H1 (cell line): ENCODE measurements at regions of chr21 and their contacts with region 1.

Region 1: DNA sequence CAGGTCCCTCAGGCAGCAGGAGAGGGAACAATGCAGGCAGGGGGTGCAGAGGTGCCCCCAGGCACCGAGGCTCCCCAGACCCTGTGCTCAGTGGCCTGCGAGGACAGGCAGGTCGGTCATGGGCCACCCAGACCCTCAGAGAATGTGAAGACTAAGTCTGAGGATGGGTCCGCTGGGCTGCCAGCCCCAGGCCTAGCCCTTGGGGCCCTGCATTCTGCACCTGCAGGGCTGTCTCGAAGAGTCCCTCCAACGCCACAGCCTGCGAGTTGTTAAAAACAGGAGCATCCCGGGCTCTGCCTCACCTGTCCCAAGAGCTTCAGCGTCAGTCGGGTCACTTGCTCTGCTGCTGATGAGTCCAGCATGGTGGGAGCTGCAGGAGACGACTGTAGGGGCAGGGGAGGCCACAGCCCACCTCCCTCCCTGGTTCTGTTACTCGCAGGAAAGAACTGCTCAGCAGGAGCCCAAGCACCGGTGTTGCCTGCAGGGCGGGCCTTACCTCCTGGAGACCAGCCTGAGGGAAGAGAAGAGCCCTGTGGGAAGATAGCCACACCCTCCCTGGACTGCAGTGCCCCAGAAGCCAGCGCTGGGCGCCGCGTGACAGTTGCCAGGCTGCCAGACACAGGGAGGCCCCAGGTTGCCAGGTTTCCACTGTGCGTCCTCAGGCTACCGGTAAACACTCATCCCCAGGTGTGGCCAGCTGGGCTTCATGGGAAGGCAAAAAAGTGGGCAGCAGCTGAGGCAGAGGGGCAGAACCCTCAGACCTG is 5.8 kb downstream of the C21orf58 start:
- DNase-seq: peak in 1 of 2 experiments; percentile 54
- H3K4me3 ChIP-seq: no peak overlapping the region
- H3K27ac ChIP-seq: no peak overlapping the region
- H3K4me1 ChIP-seq: peaks cover 0 to 20% (median 14%) of the 10 kb centered on the region in 4 experiments; a peak in 6 of 7 replicates
- H3K27me3 ChIP-seq: no peaks in the 10 kb centered on the region
- CTCF ChIP-seq: no peak
- EP300 ChIP-seq: no peak
- POLR2A ChIP-seq: no peak; a peak in 1 of 3 replicates
- RAD21 ChIP-seq: no peak

Region 2: GRCh38 chr21:46295996-46296752 is 21.7 kb before region 1 on chr21:
- CTCF ChIA-PET with region 1: interaction called, 4 read pairs
- POLR2A ChIA-PET with region 1: interaction called, 24 read pairs
- DNase-seq: peak in 1 of 2 experiments; percentile 51
- H3K4me3 ChIP-seq: no peak overlapping the region
- H3K27ac ChIP-seq: no peak overlapping the region
- H3K4me1 ChIP-seq: peaks cover 2 to 12% (median 8%) of the 10 kb centered on the region in 4 experiments; a peak in 6 of 7 replicates
- H3K27me3 ChIP-seq: peaks cover 0 to 3% (median 0%) of the 10 kb centered on the region in 4 experiments; a peak in 1 of 7 replicates
- CTCF ChIP-seq: no peak
- EP300 ChIP-seq: no peak
- POLR2A ChIP-seq: no peak
- RAD21 ChIP-seq: no peak

Region 3: GRCh38 chr21:46307625-46308024 is 10.3 kb before region 1 on chr21:
- CTCF ChIA-PET with region 1: interaction called, 3 read pairs
- POLR2A ChIA-PET with region 1: interaction called, 24 read pairs
- DNase-seq: no peak
- H3K4me3 ChIP-seq: no peak overlapping the region
- H3K27ac ChIP-seq: no peak overlapping the region
- H3K4me1 ChIP-seq: no peaks in the 10 kb centered on the region
- H3K27me3 ChIP-seq: no peaks in the 10 kb centered on the region
- CTCF ChIP-seq: no peak
- EP300 ChIP-seq: no peak
- POLR2A ChIP-seq: no peak
- RAD21 ChIP-seq: no peak

Region 4: DNA sequence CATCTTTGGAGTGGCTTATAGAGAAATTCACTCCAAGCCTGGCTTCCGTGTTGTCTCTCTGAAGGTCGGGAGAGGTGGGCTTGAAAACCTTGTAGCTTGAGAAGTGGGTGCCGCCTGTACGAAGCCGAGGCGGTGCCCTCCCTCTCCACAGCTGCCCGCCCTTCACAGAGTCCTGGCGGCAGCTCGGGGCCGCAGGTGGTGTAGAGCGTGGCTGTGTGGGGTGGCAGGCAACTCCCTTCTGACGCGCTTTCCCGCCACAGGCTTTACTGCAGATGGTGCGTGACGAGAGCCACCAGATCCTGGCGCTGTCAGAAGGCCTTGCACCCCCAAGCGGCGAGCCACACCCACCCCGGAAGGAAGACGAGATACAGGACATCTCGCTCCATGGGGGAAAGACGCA is 107.7 kb after region 1 on chr21:
- CTCF ChIA-PET with region 1: no interaction called
- POLR2A ChIA-PET with region 1: no interaction called
- DNase-seq: no peak
- H3K4me3 ChIP-seq: no peak overlapping the region
- H3K27ac ChIP-seq: no peak overlapping the region
- H3K4me1 ChIP-seq: peaks cover 0 to 16% (median 6%) of the 10 kb centered on the region in 4 experiments; a peak in 5 of 7 replicates
- H3K27me3 ChIP-seq: no peaks in the 10 kb centered on the region
- CTCF ChIP-seq: no peak
- EP300 ChIP-seq: no peak
- POLR2A ChIP-seq: no peak
- RAD21 ChIP-seq: no peak